Panc1 (cell line): ENCODE measurements at regions of chr16 and their contacts with region 1.

Region 1: GRCh38 chr16:75789237-75789636 is 62.9 kb upstream of the CPHXL start:
- DNase-seq: peak; percentile 30
- ATAC-seq: peak; percentile 73; the same call in 1 of the 2 replicates
- H3K4me3 ChIP-seq: no peak overlapping the region
- H3K27ac ChIP-seq: no peak overlapping the region
- H3K4me1 ChIP-seq: no peaks in the 10 kb centered on the region
- H3K27me3 ChIP-seq: no peaks in the 10 kb centered on the region
- CTCF ChIP-seq: peak; percentile 75

Region 2: DNA sequence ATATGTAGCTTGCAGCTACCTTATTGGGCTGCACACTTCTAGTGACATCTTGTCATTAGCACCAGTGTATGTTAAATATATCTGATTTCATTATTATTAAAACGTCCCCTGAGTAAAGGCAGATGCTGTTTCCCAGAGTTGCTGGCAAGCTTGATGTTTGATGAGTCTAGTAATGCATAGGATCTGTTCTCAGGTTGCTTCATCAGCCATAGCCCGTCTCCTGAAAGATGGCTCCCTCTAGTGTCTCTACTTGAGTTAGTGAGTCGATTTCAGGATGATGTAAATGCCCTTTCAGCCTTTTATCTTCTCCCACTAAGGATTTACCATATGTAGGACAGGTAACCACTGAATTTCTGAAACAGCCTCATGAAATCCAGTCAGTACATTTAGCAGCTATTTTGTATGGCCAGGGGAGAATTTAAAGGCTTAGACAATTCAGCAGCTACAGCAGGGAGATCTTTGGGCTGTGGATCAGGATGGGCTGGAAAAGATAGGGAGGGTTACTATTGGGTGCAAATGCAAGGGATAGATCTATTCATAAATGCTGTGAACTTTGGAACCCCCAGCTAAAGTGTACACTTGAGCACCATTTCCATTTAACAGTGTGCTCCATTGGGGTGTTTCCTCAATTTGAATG is 864.3 kb after region 1 on chr16:
- CTCF ChIA-PET with region 1: no interaction called
- POLR2A ChIA-PET with region 1: no interaction called
- in situ Hi-C with region 1: no loop called
- intact Hi-C with region 1: loop called (anchors 2 kb)
- DNase-seq: peak; percentile 22
- ATAC-seq: peak; percentile 79
- H3K4me3 ChIP-seq: no peak overlapping the region
- H3K27ac ChIP-seq: no peak overlapping the region
- H3K4me1 ChIP-seq: no peaks in the 10 kb centered on the region
- H3K27me3 ChIP-seq: no peaks in the 10 kb centered on the region
- CTCF ChIP-seq: peak; percentile 71